HCT116 (cell line): ENCODE measurements at regions of chr19 and their contacts with region 1.

Region 1: DNA sequence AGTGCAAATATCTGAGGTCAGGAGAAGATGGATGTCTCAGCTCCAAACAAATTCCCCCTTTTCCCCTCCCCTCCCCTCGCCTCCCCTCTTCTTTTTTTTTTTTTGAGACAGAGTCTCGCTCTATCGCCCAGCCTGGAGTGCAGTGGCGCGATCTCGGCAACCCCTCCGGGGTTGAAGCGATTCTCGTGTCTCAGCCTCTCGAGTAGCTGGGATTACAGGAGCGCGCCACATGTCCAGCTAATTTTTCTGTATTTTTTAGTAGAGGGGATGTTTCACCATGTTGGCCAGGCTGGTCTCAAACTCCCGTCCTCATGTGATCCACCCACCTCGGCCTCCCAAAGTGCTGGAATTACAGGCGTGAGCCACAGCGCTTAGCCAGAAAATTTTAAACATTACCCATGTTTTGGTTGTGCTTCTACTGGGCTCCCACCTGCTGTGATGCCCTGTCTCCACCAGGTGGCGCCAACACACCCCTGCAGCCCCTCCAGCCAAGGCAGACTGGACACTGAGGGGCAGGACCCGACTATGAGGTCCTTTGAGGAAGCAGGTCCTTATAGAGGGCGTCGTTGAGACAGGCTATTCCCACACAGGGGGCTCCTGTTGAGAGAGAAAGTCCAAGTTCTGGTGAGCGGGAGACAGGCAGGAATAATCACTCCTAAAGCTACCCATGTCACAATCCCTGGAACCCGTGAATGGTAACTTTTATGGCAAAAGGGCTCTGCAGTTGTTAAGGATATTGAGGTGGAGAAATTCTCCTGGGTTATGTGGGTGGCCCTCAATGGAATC is 6.3 kb downstream of the ERICH4 start:
- DNase-seq: peak; percentile 56
- ATAC-seq: peak; percentile 98
- H3K4me3 ChIP-seq: peak overlapping the region; percentile 12 to 50
- H3K27ac ChIP-seq: no peak overlapping the region
- H3K4me1 ChIP-seq: peaks cover 0 to 10% of the 10 kb centered on the region in 2 experiments; a peak in 2 of 4 replicates
- H3K27me3 ChIP-seq: no peaks in the 10 kb centered on the region
- CTCF ChIP-seq: peak; percentile 96 to 99 (median 97)
- POLR2A ChIP-seq: no peak
- RAD21 ChIP-seq: peak; percentile 92

Region 2: GRCh38 chr19:41563854-41564514 is 114.7 kb after region 1 on chr19:
- CTCF ChIA-PET with region 1: interaction called, 63 read pairs
- POLR2A ChIA-PET with region 1: interaction called, 3 read pairs
- RAD21 ChIA-PET with region 1: interaction called, 3 to 8 read pairs
- intact Hi-C with region 1: loop called (anchors 1 kb)
- DNase-seq: no peak
- ATAC-seq: no peak; the same call in 1 of the 2 replicates
- H3K4me3 ChIP-seq: no peak overlapping the region
- H3K27ac ChIP-seq: no peak overlapping the region
- H3K4me1 ChIP-seq: peaks cover 2 to 7% of the 10 kb centered on the region in 2 experiments; a peak in 1 of 4 replicates
- H3K27me3 ChIP-seq: peaks cover 44% of the 10 kb centered on the region
- CTCF ChIP-seq: no peak
- POLR2A ChIP-seq: no peak
- RAD21 ChIP-seq: no peak

Region 3: GRCh38 chr19:41570639-41571112 is 121.4 kb after region 1 on chr19:
- CTCF ChIA-PET with region 1: interaction called, 63 read pairs
- POLR2A ChIA-PET with region 1: no interaction called
- RAD21 ChIA-PET with region 1: interaction called, 4 read pairs
- intact Hi-C with region 1: loop called (anchors 1 kb)
- DNase-seq: peak; percentile 59
- ATAC-seq: peak; percentile 99
- H3K4me3 ChIP-seq: no peak overlapping the region
- H3K27ac ChIP-seq: no peak overlapping the region
- H3K4me1 ChIP-seq: peaks cover 3 to 10% of the 10 kb centered on the region in 2 experiments; a peak in 3 of 4 replicates
- H3K27me3 ChIP-seq: peaks cover 60% of the 10 kb centered on the region
- CTCF ChIP-seq: peak; percentile 86 to 95 (median 91); a peak in 5 of 6 replicates
- POLR2A ChIP-seq: no peak
- RAD21 ChIP-seq: peak; percentile 85

Region 4: GRCh38 chr19:41595258-41595889 is 146.1 kb after region 1 on chr19:
- CTCF ChIA-PET with region 1: interaction called, 5 read pairs
- POLR2A ChIA-PET with region 1: no interaction called
- RAD21 ChIA-PET with region 1: no interaction called
- intact Hi-C with region 1: loop called (anchors 1 kb)
- DNase-seq: peak; percentile 74
- ATAC-seq: peak; percentile 75
- H3K4me3 ChIP-seq: no peak overlapping the region
- H3K27ac ChIP-seq: no peak overlapping the region
- H3K4me1 ChIP-seq: no peaks in the 10 kb centered on the region
- H3K27me3 ChIP-seq: peaks cover 16% of the 10 kb centered on the region; the same call in 1 of the 2 replicates
- CTCF ChIP-seq: peak; percentile 61 to 83 (median 78); a peak in 5 of 6 replicates
- POLR2A ChIP-seq: no peak
- RAD21 ChIP-seq: peak; percentile 67